Left cardiac atrium (tissue), 4 donors: ENCODE measurements at regions of chr14 and their contacts with region 1.

Region 1: GRCh38 chr14:28751467-28752058 is 15.0 kb upstream of the FOXG1 start:
- DNase-seq: no peak
- ATAC-seq: peak in 1 of 2 donors; percentile 35

Region 2: DNA sequence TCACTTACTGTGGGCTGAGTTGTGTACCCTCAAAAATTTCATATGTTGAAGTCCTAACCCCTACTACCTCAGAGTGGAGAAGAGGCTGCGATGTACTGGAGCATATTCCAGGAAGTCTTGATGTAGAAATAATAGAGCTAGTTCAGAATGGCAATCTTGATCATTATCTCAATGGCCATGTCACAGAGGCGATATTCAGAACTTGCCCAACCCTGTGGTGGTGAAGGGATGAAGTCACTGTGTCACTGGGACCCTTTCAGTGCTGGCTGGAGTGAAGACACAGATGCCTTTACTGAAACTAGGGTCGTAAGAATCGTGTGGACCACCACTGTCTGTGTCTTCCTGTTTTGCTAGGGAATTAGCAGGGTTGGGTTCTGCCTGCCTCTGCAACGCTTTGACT is 105.8 kb after region 1 on chr14:
- intact Hi-C with region 1: no loop called
- DNase-seq: no peak
- ATAC-seq: no peak

Region 3: DNA sequence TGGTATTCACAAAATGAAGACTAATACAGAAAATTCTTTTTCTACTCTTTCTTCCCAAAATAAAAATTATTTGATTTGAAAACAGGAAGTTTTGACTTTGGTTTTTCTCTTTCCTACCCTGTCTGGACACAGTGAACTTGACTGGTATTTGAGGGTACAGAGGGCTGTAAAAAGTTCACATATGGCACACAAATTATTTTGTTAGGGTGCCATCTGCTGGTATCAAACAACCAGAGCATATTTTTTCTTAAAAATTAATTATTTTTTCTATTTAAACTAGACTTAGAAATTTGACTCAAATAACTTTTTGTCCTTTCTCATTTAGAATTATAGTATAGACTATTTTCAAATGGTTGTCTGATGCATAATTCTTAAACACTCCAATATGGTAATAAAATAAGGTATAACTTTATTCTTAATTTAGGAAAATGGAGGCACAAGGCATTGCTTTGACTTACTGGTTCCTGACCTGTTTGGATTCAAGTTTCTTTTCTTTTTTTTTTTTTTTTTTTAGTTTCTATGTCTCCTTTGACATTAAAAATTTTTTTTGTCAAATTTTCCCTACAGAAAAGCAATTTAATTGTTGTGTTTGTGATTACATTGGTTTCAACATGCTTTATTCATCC is 785.4 kb after region 1 on chr14:
- intact Hi-C with region 1: loop called in 1 of 2 experiments (anchors 5 kb)
- DNase-seq: no peak
- ATAC-seq: no peak

Region 4: DNA sequence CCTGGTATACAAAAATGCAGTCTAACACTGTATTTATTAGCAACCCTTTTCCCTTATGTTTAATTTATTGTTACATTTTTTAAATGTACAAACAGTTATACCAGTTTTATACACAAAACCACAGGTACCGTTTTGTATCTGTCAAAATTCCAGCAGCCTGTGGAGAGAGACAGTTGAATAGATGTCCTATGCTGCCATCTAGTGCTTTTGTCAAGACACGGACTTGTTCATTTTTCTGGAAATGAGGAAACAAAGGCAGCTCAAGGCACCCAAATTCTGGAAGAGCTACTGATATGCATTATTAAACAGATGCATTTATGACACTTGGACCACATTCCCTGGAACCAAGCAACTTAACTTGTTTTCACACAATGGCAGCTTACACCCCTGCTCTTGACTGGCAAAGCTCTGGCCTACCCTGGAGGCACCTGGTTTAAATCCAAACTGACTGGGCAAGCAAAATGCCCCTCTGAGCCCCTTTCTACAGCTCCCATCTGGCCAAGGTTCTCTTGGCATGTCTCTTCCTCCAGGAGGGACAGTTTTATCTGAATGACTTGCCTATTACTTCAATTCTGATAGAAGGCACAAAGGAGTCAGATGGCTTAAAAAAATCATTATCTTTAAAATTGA is 1463.0 kb after region 1 on chr14:
- intact Hi-C with region 1: loop called in 1 of 2 experiments (anchors 10 kb)
- DNase-seq: no peak
- ATAC-seq: peak; percentile 34 to 67